ENCODE measurements at regions of chr18 and their contacts with region 1.

Region 1: GRCh38 chr18:47772374-47773248 is 157.8 kb downstream of the SMAD2 start:
- H3K4me3 Mint-ChIP-seq: no peak overlapping the region
- H3K27ac Mint-ChIP-seq: no peak overlapping the region
- H3K4me1 Mint-ChIP-seq: no peaks in the 10 kb centered on the region
- H3K27me3 Mint-ChIP-seq: peaks cover 10% of the 10 kb centered on the region

Region 2: DNA sequence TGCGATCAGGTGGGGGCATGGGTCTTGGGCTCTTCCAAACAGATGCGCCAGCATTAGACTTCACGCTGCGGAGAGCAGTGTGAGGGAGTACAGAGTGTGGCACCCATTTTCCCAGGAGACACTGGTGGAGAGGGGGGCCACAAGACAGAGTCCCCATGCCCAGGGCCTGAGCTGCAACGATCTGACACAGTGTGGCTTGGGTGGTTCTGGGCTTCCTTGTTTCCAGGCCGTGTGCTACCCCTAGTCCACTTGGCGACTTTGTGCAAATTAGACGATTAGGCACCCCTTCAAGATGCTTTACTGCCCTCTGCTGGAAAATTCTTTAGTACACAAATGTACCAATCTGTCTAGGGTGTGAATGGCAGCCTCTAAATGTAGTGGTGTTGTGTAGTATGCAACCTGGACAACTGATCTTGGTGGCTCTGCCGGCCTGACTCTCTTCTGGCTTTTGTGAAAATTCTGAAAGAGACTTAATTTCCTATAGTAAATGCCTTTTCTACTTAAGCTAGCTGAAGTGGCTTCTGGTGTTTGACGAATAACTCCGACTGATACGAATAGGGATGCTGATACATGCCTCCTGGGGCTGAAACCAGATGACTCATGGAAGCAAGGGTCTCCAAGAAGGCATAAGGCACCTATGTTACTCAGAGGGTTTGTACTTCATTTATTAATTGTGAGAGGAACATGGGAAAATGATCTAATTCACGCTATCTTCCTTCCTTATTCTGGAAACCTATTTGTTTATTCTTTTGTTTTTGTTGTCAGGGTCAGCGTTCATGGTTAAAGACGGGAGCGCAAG is 250.1 kb after region 1 on chr18:
- intact Hi-C with region 1: loop called (anchors 1 kb)
- H3K4me3 Mint-ChIP-seq: no peak overlapping the region
- H3K27ac Mint-ChIP-seq: no peak overlapping the region
- H3K4me1 Mint-ChIP-seq: peaks cover 38% of the 10 kb centered on the region
- H3K27me3 Mint-ChIP-seq: peaks cover 34% of the 10 kb centered on the region

Measured in dendritic cell treated with granulocyte-macrophage colony-stimulating factor and Interleukin-4, amounts not matched to agents 40 ng/mL and 50 ng/mL, for 4 days (primary cell).